Naive thymus-derived CD8-positive, alpha-beta T cell (primary cell): ENCODE measurements at regions of chr19 and their contacts with region 1.

Region 1: GRCh38 chr19:10565567-10566407 is at the start of gene KRI1:
- DNase-seq: peak; percentile 95 to 99 (median 98)
- ATAC-seq: peak; percentile 47 to 52
- H3K4me3 Mint-ChIP-seq: peak within 1 kb of the TSS; percentile 83 to 100 (median 98)
- H3K27ac Mint-ChIP-seq: peak within 1 kb of the TSS; percentile 88 to 99 (median 98)
- H3K4me1 Mint-ChIP-seq: peaks cover 32 to 56% (median 53%) of the 10 kb centered on the region in 4 donors
- H3K27me3 Mint-ChIP-seq: no peaks in the 10 kb centered on the region
- polyA plus RNA-seq, gene KRI1: 12.8 to 46.9 (median 20.9) TPM

Region 2: DNA sequence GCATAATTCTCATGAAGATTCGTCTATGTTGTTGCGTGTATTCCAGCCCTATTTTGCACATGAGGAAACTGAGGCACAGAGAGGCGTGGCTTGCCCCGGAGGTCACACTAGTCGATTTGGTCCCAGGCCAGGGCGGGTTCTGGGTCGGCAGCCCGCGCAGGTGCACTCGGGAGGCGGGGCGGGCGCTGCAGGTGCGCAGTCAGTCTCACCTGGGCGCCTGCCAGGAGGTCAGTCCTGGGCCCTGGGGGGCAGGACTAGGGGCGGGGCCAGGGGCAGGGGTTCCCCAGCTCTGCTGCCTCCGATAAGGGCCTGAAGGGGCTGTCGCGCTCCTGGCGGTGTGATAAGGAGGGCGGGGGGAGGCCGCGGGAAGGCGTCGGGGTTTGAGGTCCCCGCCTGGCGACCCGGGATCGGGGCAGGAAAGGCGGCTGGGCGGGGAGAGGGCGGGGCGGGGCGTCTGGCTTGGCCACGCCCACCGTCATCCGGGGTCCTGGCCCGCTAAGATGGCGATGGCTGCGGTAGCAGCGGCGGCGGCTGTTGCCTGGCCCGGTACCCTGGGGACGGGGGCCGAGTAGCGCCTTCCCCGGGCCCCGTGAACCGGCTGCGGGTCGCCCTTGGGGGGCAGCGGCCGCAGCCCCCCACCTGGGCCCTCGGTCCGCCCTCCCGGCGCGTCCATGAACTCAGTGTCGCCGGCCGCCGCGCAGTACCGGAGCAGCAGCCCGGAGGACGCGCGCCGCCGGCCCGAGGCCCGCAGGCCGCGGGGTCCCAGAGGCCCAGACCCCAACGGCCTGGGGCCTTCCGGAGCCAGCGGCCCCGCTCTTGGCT is 22.2 kb before region 1 on chr19 and contains the start of gene ATG4D:
- POLR2A ChIA-PET with region 1: interaction called, 17 read pairs
- DNase-seq: peak; percentile 76 to 90 (median 85)
- ATAC-seq: peak; percentile 87
- H3K4me3 Mint-ChIP-seq: peak within 1 kb of the TSS; percentile 79 to 92 (median 88)
- H3K27ac Mint-ChIP-seq: peak within 1 kb of the TSS; percentile 82 to 95 (median 91)
- H3K4me1 Mint-ChIP-seq: peaks cover 8 to 27% (median 16%) of the 10 kb centered on the region in 4 donors
- H3K27me3 Mint-ChIP-seq: peaks cover 3 to 12% (median 4%) of the 10 kb centered on the region in 5 donors
- polyA plus RNA-seq, gene ATG4D: 9.2 to 19.3 (median 12.2) TPM

Region 3: DNA sequence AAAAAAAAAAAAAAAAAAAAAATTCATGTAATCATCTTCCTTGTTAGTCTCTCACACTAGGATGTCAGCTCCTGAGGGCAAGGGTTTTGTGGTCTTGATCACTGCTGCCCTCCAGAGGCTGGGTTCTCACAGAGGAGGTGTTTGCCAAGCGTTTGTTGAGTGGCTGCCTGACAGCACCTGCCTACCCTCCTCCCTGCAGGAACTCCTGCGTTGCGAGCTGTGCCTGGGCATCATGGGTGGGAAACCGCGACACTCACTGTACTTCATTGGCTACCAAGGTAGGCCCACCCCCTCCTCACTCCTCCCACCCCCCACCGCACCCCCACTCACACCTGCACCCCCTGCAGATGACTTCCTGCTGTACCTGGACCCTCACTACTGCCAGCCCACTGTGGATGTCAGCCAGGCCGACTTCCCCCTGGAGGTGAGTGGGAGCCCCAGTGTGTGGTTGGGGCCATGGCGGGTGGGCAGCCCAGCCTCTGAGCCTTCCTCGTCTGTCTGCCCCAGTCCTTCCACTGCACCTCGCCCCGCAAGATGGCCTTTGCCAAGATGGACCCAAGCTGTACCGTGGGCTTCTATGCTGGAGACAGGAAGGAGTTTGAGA is 14.0 kb before region 1 on chr19:
- POLR2A ChIA-PET with region 1: interaction called, 159 read pairs
- DNase-seq: peak in 2 of 10 donors; percentile 24 to 27
- ATAC-seq: no peak
- H3K4me3 Mint-ChIP-seq: peak overlapping the region in 7 of 10 donors; percentile 19 to 73 (median 48)
- H3K27ac Mint-ChIP-seq: peak overlapping the region in 9 of 10 donors; percentile 19 to 95 (median 79)
- H3K4me1 Mint-ChIP-seq: peaks cover 15 to 65% (median 53%) of the 10 kb centered on the region in 4 donors
- H3K27me3 Mint-ChIP-seq: no peaks in the 10 kb centered on the region

Region 4: GRCh38 chr19:10653715-10654492 is 88.1 kb after region 1 on chr19 and contains the start of gene ILF3:
- POLR2A ChIA-PET with region 1: interaction called, 22 read pairs
- DNase-seq: peak; percentile 97 to 100 (median 100)
- ATAC-seq: peak; percentile 80 to 87
- H3K4me3 Mint-ChIP-seq: peak within 1 kb of the TSS; percentile 93 to 97 (median 96)
- H3K27ac Mint-ChIP-seq: peak within 1 kb of the TSS; percentile 97 to 100 (median 99)
- H3K4me1 Mint-ChIP-seq: peaks cover 16 to 58% (median 44%) of the 10 kb centered on the region in 4 donors
- H3K27me3 Mint-ChIP-seq: peaks cover 0 to 3% (median 0%) of the 10 kb centered on the region in 5 donors
- polyA plus RNA-seq, gene ILF3: 79.6 to 99.1 (median 92.8) TPM

Region 5: DNA sequence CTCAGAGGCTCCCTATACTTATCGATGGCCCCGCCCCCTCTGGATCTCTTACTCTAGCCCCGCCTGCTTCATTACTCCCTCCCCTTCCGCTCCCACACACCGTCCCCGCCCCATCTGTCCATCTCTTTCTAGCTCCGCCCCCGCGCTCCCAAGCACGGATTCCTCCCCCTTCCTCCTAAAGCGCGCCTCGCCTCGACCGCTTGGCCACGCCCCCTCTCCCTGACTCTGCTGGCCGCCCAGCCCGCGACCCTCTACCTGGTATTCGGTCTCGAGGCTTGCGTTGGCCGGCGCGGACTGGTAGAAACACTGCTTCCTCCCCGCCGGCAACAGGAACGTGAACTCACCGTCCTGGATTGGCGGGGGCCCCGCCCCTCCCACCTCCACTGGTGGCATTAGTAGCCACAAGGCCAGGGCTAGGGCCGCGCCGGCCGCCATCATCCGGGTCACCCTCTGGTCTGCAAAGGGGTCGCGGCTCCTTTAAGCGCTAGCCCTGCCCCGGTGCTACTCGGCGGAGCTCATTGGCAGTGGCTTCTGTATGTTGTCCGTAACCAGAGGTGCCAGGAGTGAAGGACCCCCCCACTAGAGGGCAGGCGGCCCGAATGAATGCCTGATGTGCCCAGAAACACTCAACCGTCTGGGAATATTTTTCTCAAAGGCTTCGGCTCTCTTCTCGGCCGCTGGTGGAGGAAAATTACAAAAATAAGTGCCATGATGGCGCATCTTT is 270.1 kb after region 1 on chr19 and contains the start of gene TMED1:
- POLR2A ChIA-PET with region 1: interaction called, 10 read pairs
- DNase-seq: peak; percentile 87 to 97 (median 94)
- ATAC-seq: peak; percentile 90 to 92
- H3K4me3 Mint-ChIP-seq: peak within 1 kb of the TSS; percentile 95 to 100 (median 97)
- H3K27ac Mint-ChIP-seq: peak within 1 kb of the TSS; percentile 98 to 100 (median 100)
- H3K4me1 Mint-ChIP-seq: peaks cover 8 to 16% (median 15%) of the 10 kb centered on the region in 4 donors
- H3K27me3 Mint-ChIP-seq: no peaks in the 10 kb centered on the region
- polyA plus RNA-seq, gene TMED1: 23.7 to 26.3 (median 25.0) TPM